ENCODE measurements at regions of chr13 and their contacts with region 1.

Region 1: GRCh38 chr13:97749174-97749573 is 204.3 kb upstream of the IPO5 start:
- DNase-seq: peak in 1 of 2 experiments; percentile 17
- H3K4me3 ChIP-seq: no peak overlapping the region
- H3K4me3 Mint-ChIP-seq: no peak overlapping the region
- H3K27ac Mint-ChIP-seq: no peak overlapping the region
- H3K4me1 ChIP-seq: peaks cover 5% of the 10 kb centered on the region
- H3K4me1 Mint-ChIP-seq: peaks cover 7% of the 10 kb centered on the region
- H3K27me3 ChIP-seq: no peaks in the 10 kb centered on the region; the same call in 1 of the 2 replicates
- H3K27me3 Mint-ChIP-seq: peaks cover 8% of the 10 kb centered on the region
- CTCF ChIP-seq: peak in 1 of 2 experiments; percentile 10

Region 2: GRCh38 chr13:97810152-97810551 is 61.0 kb after region 1 on chr13:
- CTCF ChIA-PET with region 1: interaction called, 6 read pairs
- POLR2A ChIA-PET with region 1: no interaction called
- intact Hi-C with region 1: loop called (anchors 1 kb)
- DNase-seq: peak in 1 of 2 experiments; percentile 32
- H3K4me3 ChIP-seq: no peak overlapping the region
- H3K4me3 Mint-ChIP-seq: no peak overlapping the region
- H3K27ac Mint-ChIP-seq: no peak overlapping the region
- H3K4me1 ChIP-seq: no peaks in the 10 kb centered on the region
- H3K4me1 Mint-ChIP-seq: no peaks in the 10 kb centered on the region
- H3K27me3 ChIP-seq: no peaks in the 10 kb centered on the region
- H3K27me3 Mint-ChIP-seq: peaks cover 21% of the 10 kb centered on the region
- CTCF ChIP-seq: peak; percentile 29 to 64

Region 3: GRCh38 chr13:98206946-98207345 is 457.8 kb after region 1 on chr13:
- CTCF ChIA-PET with region 1: no interaction called
- POLR2A ChIA-PET with region 1: no interaction called
- intact Hi-C with region 1: no loop called
- DNase-seq: no peak
- H3K4me3 ChIP-seq: no peak overlapping the region
- H3K4me3 Mint-ChIP-seq: no peak overlapping the region
- H3K27ac Mint-ChIP-seq: peak overlapping the region; percentile 26
- H3K4me1 ChIP-seq: peaks cover 4% of the 10 kb centered on the region
- H3K4me1 Mint-ChIP-seq: peaks cover 24% of the 10 kb centered on the region
- H3K27me3 ChIP-seq: no peaks in the 10 kb centered on the region
- H3K27me3 Mint-ChIP-seq: no peaks in the 10 kb centered on the region
- CTCF ChIP-seq: no peak

Measured in Caco-2 (cell line).